ENCODE measurements at regions of chr9 and their contacts with region 1.

Region 1: GRCh38 chr9:121640076-121640475 is 11.4 kb upstream of the DAB2IP start:
- DNase-seq: peak; percentile 76
- ATAC-seq: peak; percentile 75
- H3K4me3 Mint-ChIP-seq: no peak overlapping the region
- H3K27ac Mint-ChIP-seq: 0 out of 2 replicates have a peak overlapping the region, but pooled peaks have one; percentile 23
- H3K4me1 Mint-ChIP-seq: peaks cover 40% of the 10 kb centered on the region
- H3K27me3 Mint-ChIP-seq: no peaks in the 10 kb centered on the region
- CTCF ChIP-seq: no peak; the same call in 1 of the 2 replicates

Region 2: GRCh38 chr9:121376214-121376830 is 263.8 kb before region 1 on chr9:
- CTCF ChIA-PET with region 1: no interaction called
- POLR2A ChIA-PET with region 1: no interaction called
- DNase-seq: no peak
- ATAC-seq: no peak
- H3K4me3 Mint-ChIP-seq: no peak overlapping the region
- H3K27ac Mint-ChIP-seq: no peak overlapping the region
- H3K4me1 Mint-ChIP-seq: peaks cover 6% of the 10 kb centered on the region; the same call in 1 of the 2 replicates
- H3K27me3 Mint-ChIP-seq: peaks cover 6% of the 10 kb centered on the region
- CTCF ChIP-seq: no peak

Region 3: DNA sequence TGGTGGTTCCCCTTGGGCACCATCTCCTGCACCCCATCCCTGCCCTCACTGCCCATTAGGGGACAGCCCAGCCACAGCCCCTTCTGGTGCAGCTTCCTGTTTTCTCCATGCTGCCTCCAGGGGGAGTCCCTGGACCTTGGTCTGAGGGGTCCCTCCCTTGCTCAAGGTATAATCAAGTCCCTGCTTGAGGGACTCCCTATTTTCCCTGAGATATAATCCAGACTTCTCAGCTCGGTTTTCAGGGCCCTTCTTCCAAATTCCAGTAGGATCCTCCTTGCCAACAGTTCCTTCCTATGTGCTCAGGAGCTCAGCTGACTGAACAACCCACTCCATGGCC is 19.0 kb before region 1 on chr9:
- CTCF ChIA-PET with region 1: interaction called, 21 read pairs
- POLR2A ChIA-PET with region 1: no interaction called
- DNase-seq: peak; percentile 74
- ATAC-seq: peak; percentile 97
- H3K4me3 Mint-ChIP-seq: no peak overlapping the region
- H3K27ac Mint-ChIP-seq: peak overlapping the region; percentile 32
- H3K4me1 Mint-ChIP-seq: peaks cover 20% of the 10 kb centered on the region
- H3K27me3 Mint-ChIP-seq: no peaks in the 10 kb centered on the region
- CTCF ChIP-seq: no peak

Region 4: DNA sequence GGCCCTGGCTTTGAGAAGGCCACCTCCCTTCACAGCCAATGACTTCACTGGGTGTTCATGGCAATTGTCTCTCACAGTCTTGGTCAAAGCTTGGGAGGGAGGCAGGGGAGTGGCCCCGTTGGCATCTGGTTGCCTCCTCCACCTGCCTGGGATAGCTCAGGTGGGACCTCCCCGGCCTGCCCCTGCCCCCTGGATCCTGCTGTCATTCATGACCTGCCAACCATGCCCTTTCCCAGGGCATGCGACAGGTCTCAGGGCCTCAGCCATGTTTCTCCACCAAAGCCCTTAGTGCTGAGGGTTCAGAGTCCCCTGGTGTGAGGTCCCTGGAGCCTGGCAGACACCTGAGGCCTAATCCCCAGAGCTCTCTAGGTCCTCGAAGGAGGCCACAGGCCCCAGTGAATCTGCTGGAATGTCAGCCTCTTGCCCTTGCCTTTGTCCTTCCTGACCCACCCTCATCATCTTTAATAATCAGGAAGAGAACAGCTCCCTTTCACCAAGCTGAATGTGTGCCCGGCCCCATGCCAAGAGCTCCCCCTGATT is 16.9 kb after region 1 on chr9:
- CTCF ChIA-PET with region 1: interaction called, 12 read pairs
- POLR2A ChIA-PET with region 1: no interaction called
- DNase-seq: no peak
- ATAC-seq: no peak
- H3K4me3 Mint-ChIP-seq: no peak overlapping the region
- H3K27ac Mint-ChIP-seq: no peak overlapping the region
- H3K4me1 Mint-ChIP-seq: peaks cover 36% of the 10 kb centered on the region
- H3K27me3 Mint-ChIP-seq: 0 out of 2 replicates have a peak, but pooled peaks cover 3% of the 10 kb centered on the region
- CTCF ChIP-seq: no peak

Region 5: GRCh38 chr9:121674952-121675351 is 34.9 kb after region 1 on chr9:
- CTCF ChIA-PET with region 1: interaction called, 12 read pairs
- POLR2A ChIA-PET with region 1: no interaction called
- DNase-seq: no peak
- ATAC-seq: peak; percentile 74
- H3K4me3 Mint-ChIP-seq: no peak overlapping the region
- H3K27ac Mint-ChIP-seq: no peak overlapping the region
- H3K4me1 Mint-ChIP-seq: peaks cover 14% of the 10 kb centered on the region
- H3K27me3 Mint-ChIP-seq: no peaks in the 10 kb centered on the region
- CTCF ChIP-seq: no peak

Region 6: DNA sequence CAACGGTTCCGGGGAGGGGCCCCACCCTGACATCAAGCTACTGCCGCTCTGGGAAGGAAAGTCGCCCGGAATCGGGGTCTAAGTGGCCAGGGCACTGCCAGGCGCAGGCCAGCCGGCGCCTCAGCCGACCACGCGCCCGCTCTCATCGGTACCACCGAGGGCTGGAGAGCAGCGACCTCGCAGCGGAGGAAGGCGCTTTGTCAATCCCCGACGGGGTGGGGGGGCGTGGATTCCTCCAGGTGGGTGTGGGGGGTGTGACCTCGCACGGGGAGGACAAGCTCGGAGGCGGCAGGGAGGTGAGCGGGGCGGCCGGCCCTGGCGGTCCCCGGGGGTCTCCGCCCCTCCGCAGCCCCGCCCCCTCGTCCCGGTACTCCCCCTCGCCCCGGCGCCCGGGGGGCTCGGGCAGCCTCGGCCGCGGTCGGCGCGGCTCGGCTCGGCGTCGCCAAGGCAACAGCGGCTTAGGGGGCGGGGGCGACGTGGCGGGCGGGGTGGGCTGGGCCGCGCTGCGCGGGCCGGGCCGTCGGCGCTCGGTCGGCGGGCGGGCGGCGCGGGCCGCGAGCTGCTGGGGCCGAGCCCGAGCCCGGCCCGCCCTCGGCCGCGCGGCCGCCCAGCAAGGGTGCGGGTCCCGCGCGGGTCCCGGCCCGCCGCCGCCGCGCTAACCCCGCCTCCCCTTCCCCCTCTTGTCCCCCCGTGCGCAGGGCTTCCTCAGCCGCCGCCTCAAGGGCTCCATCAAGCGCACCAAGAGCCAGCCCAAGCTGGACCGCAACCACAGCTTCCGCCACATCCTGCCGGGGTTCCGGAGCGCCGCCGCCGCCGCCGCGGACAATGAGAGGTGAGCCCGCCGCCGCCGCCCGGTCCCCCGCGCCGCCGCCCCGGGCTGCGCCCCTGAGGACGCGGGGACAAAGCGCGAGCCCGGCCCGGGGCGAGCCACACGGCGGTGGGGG is 58.8 kb after region 1 on chr9:
- CTCF ChIA-PET with region 1: interaction called, 28 read pairs
- POLR2A ChIA-PET with region 1: no interaction called
- DNase-seq: peak; percentile 77
- ATAC-seq: peak; percentile 66
- H3K4me3 Mint-ChIP-seq: peak overlapping the region; percentile 56
- H3K27ac Mint-ChIP-seq: no peak overlapping the region
- H3K4me1 Mint-ChIP-seq: peaks cover 35% of the 10 kb centered on the region
- H3K27me3 Mint-ChIP-seq: peaks cover 3% of the 10 kb centered on the region; the same call in 1 of the 2 replicates
- CTCF ChIP-seq: no peak